Heart right ventricle (tissue), 16 donors: ENCODE measurements at regions of chr15 and their contacts with region 1.

Region 1: DNA sequence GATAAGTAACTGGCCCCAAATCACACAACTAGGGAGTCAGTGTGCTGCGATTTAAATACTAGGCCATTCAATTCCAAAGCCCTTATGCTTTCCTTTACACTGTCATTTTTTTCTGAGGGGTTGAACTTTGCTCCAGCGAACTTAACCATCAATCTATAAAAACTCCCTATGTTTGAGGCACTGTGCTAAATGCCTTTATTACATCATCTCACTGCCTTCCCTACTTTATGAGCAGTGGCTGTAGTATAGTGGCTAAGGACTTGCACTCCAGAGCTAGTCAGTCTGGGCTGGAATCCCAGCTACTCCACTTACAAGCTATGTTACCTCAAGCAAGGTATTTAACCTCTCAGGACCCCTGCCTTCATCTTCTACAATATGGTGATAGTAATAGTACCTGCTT is 26.9 kb upstream of the WDR72 start:
- DNase-seq: no peak
- ATAC-seq: no peak
- H3K4me3 ChIP-seq: no peak overlapping the region
- H3K27ac ChIP-seq: no peak overlapping the region
- H3K4me1 ChIP-seq: no peaks in the 10 kb centered on the region
- H3K27me3 ChIP-seq: peaks cover 0 to 6% (median 0%) of the 10 kb centered on the region in 7 donors
- CTCF ChIP-seq: no peak

Region 2: GRCh38 chr15:53716909-53717876 is 69.2 kb before region 1 on chr15:
- intact Hi-C with region 1: loop called in 1 of 10 experiments (anchors 10 kb)
- DNase-seq: no peak
- ATAC-seq: no peak
- H3K4me3 ChIP-seq: no peak overlapping the region
- H3K27ac ChIP-seq: no peak overlapping the region
- H3K4me1 ChIP-seq: no peaks in the 10 kb centered on the region
- H3K27me3 ChIP-seq: peaks cover 0 to 3% (median 0%) of the 10 kb centered on the region in 7 donors
- CTCF ChIP-seq: peak in 5 of 9 donors; percentile 12 to 47 (median 26)

Region 3: GRCh38 chr15:53833134-53833624 is 46.8 kb after region 1 on chr15:
- intact Hi-C with region 1: loop called in 1 of 10 experiments (anchors 10 kb)
- DNase-seq: peak in 1 of 2 donors; percentile 47
- ATAC-seq: peak in 7 of 8 donors; percentile 27 to 90 (median 70)
- H3K4me3 ChIP-seq: no peak overlapping the region
- H3K27ac ChIP-seq: peak overlapping the region in 2 of 10 donors; percentile 27 to 52
- H3K4me1 ChIP-seq: peaks cover 0 to 24% (median 0%) of the 10 kb centered on the region in 9 donors
- H3K27me3 ChIP-seq: no peaks in the 10 kb centered on the region
- CTCF ChIP-seq: no peak

Region 4: DNA sequence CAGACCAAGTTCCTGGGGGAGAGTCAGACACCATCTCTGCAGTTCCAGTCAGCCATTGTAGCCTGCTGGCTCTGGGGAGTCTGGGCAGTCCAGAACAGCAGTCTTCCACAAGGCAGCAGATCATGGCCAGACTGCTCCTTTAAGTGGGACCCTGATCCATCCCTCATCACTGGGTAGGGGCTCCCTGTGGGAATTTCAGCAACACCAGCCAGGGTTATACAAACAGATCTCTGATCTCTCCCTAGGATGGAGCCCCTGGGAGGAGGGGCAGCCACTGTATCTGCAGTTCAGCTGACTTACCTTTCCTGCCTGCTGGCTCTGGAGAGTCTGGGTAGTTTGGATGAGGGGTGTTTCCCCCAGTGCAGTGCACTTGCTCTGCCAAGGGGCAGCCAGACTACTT is 149.7 kb after region 1 on chr15:
- intact Hi-C with region 1: no loop called
- DNase-seq: no peak
- ATAC-seq: no peak
- H3K4me3 ChIP-seq: no peak overlapping the region
- H3K27ac ChIP-seq: no peak overlapping the region
- H3K4me1 ChIP-seq: no peaks in the 10 kb centered on the region
- H3K27me3 ChIP-seq: no peaks in the 10 kb centered on the region
- CTCF ChIP-seq: no peak